SK-MEL-5 (cell line): ENCODE measurements at regions of chr22 and their contacts with region 1.

Region 1: GRCh38 chr22:19832476-19833108 is 22.1 kb downstream of the GNB1L start:
- DNase-seq: no peak

Region 2: DNA sequence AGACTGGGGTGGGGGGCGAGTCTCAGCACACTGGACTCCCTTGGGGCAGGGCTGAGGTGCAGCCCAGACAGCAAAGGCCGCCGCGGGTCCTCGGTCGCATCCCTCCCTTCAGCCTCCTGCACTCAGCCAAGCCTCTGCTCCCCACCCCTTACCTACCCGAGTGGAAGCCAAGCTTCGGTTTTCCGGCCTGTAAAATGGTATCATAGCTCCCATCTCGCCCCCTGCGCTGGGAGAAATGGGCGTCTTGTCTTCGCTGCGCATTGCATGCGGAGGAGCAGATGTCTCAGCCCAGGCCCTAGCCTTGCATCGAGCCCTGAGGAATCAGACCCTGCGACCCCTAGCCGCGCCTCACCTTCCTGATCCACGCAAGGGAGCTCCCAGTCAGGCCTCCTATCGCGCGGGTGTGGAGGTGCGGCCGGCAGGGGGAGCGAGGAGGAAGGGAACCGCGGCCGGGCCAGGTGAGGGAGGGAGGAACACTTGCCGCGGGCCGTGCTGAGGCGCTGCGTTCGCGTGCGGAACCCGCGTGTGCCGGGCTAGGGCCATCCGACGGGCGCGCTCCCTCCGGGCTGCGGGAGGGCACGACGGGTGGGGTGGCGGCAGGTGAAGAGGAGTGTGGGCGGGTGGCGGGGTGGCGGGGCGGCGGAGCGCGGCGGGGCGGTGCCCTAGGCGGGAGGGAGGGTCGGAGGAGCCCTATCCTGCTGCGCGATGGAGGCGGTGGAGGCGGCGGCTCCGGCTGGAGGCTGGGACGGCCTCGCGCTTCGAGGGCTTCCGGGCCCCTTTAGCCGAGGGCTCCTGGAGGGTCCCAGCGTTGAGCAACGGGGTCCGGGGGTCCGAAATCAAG is 76.1 kb before region 1 on chr22:
- in situ Hi-C with region 1: loop called (anchors 10 kb)
- DNase-seq: peak; percentile 38